ENCODE measurements at regions of chr22 and their contacts with region 1.

Region 1: DNA sequence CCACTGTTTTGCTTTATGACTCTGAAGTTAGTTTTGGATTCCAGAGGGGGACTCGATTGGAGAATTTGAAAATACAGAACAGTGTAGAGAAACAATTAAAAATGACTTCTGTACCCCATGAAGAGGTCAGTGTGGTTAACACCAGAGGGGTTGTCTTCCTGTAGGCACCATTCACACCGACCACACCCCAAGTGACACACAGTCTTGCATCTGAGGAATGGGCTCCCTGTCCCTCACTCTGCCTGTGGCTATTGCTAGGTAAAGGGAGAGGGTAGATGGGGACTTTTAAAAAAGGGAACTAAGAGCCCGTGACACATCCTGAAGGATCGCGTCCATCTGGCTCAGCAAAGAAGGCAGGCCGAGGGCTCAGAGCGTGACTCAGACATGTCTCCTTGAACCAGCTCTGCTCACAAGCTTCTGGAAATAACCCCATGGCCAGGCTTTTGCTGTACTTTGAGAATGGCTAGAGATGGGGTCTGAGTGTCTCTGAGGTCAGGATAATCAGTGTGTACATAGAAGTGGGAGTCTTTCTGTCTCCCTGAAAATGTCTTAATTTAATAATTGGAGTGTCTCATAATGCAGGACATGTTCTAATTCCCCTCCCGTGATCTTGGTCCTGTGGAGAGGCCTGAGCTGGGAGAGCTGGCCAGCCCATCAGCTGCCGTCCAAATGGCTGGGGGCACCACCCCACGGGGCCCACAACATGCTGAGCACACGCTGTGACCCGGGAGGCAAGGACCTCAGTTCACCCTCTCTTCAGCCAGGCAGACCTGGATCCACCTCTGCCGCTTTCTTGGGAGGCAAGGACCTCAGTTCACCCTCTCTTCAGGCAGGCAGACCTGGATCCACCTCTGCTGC is 39.3 kb downstream of the SGSM1 start:
- DNase-seq: peak; percentile 31 to 35
- ATAC-seq: peak; percentile 81 to 90 (median 82)
- H3K4me3 ChIP-seq: no peak overlapping the region
- H3K4me3 Mint-ChIP-seq: peak overlapping the region; percentile 92
- H3K27ac ChIP-seq: peak overlapping the region; percentile 66
- H3K27ac Mint-ChIP-seq: peak overlapping the region; percentile 89 to 95
- H3K4me1 ChIP-seq: peaks cover 41% of the 10 kb centered on the region
- H3K4me1 Mint-ChIP-seq: peaks cover 52 to 70% of the 10 kb centered on the region in 2 donors
- H3K27me3 ChIP-seq: no peaks in the 10 kb centered on the region
- H3K27me3 Mint-ChIP-seq: no peaks in the 10 kb centered on the region
- CTCF ChIP-seq: no peak

Region 2: DNA sequence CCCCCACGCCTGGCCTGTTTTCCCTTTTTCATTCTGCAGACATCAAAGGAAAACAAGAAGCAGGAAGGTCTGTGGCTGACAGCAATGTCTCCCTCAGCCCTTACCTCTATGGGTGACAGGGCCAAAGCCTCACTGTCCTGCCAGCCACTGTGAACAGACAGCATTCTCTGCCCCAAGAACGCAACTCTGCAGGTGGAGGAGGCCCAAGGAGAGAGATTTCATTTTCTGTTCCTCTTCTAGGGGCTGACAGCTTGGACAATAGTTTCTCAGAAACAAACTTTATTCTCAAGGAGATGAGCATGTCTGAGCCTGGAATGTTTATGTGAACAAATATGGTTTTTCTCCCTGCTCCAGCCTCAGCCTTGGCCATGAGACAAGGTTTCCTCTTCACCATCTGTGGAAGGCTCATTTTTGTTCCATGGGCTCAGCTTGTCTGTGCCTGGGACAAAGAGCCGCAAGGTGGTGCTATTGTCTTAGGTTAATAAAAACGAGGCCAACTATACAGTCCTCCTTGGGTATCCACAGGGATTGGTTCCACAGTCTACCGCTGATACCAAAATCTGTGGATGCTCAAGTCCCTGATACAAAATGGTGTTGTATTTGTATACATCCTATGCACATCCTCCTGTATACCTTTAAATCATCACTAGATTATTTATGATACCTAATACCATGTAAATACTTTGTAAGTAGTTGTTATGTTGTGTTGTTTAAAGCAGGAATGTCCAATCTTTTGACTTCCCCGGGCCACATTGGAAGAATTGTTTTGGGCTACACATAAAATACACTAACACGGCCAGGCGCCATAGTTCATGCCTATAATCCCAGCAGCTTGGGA is 76.5 kb before region 1 on chr22:
- intact Hi-C with region 1: loop called (anchors 1 kb)
- DNase-seq: peak; percentile 37 to 66
- ATAC-seq: peak in 2 of 3 donors; percentile 76 to 80
- H3K4me3 ChIP-seq: no peak overlapping the region
- H3K4me3 Mint-ChIP-seq: no peak overlapping the region
- H3K27ac ChIP-seq: no peak overlapping the region
- H3K27ac Mint-ChIP-seq: no peak overlapping the region
- H3K4me1 ChIP-seq: no peaks in the 10 kb centered on the region
- H3K4me1 Mint-ChIP-seq: no peaks in the 10 kb centered on the region
- H3K27me3 ChIP-seq: no peaks in the 10 kb centered on the region
- H3K27me3 Mint-ChIP-seq: peaks cover 9 to 12% of the 10 kb centered on the region in 2 donors
- CTCF ChIP-seq: peak; percentile 68

Region 3: GRCh38 chr22:24805790-24806662 is 39.2 kb before region 1 on chr22 and contains the start of gene SGSM1:
- intact Hi-C with region 1: loop called (anchors 2 kb)
- DNase-seq: peak; percentile 81 to 88
- ATAC-seq: peak; percentile 91 to 96 (median 96)
- H3K4me3 ChIP-seq: peak within 1 kb of the TSS; percentile 75
- H3K4me3 Mint-ChIP-seq: peak within 1 kb of the TSS; percentile 79
- H3K27ac ChIP-seq: peak within 1 kb of the TSS; percentile 69
- H3K27ac Mint-ChIP-seq: peak within 1 kb of the TSS; percentile 40 to 65
- H3K4me1 ChIP-seq: peaks cover 16% of the 10 kb centered on the region
- H3K4me1 Mint-ChIP-seq: peaks cover 12 to 30% of the 10 kb centered on the region in 2 donors
- H3K27me3 ChIP-seq: no peaks in the 10 kb centered on the region
- H3K27me3 Mint-ChIP-seq: no peaks in the 10 kb centered on the region
- CTCF ChIP-seq: no peak
- total RNA-seq, gene SGSM1: 13.9 to 15.4 (median 13.9) TPM